GM18951 (cell line): ENCODE measurements at regions of chr22 and their contacts with region 1.

Region 1: DNA sequence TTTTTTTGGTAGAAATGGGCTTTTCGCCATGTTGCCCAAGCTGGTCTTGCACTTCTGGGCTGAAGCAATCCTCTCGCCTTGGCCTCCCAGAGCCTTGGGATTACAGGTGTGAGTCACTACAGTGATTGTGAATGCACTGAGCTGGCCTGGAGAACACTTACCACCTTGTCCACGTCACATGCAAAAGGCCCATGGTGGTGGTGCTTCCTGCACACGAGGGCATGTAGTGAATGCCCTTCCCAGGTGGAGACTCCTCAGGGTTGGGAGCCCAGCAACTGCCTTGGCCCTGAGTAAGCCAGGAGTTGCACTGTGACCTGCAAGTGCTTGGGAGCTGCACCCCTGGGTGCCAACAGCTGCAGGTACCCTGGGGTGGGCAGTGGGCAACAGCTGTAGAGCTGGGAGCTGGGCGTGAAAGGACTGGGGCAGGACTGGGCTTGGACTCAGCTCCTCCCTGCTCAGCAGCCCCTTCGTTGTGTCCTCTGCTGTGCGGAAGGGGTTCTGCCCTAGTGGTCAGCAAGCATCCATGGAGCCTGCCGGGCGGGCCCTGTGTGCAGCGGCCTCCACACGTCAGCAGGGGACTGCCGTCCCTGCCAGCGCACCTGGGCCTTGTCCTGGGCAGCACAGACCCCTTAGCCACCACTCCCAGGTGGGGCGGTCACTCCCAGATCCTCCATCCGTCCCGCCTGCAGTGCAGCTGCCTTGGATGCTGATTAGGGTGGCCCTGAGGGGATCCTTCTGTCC is 9.3 kb upstream of the ADORA2A start:
- POLR2A ChIP-seq: no peak

Region 2: GRCh38 chr22:24516301-24516737 is 98.2 kb after region 1 on chr22:
- in situ Hi-C with region 1: loop called (anchors 5 kb)
- POLR2A ChIP-seq: no peak